ENCODE measurements at regions of chr5 and their contacts with region 1.

Region 1: DNA sequence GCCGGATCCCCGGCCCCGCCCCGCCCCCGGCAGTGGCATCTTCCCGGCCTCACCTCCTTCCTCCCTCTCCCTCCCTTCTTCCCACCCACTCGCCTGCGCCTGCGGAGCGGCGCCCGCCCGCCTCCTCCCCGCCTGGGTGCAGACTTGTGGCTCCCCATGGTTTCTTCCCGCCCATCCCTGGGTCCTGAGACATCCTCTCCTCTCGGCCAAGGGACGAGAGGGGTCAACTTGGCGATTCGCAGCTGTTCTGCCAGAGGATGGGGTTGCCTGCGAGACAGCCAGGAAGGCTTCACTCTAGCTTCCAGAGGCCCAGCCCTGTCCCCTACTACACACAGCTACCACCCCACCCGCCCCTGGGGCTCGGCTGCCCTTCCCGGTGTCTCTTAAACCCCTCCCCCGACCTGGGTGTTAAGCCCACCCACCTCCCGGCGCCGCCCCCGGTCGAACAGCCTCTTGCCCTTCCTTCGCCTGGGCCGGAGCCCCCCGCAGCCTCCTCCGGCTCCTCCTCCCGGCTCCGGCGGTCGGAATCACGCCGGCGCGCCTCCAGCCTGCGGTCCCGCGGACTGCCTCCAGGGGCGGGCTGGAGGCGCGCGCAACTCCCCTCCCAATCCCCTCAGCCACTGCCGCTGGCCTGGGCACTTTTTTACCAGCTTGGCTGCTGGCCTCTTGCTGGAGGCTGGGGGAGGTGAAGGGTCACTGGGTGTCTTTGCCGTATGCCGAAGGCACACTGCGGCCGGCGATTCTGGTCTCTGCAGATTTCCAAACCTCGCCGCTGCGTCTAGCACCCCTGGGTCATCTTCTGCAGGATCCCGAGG is 1.9 kb downstream of the JADE2 start:
- DNase-seq: peak; percentile 92 to 96 (median 96)
- ATAC-seq: peak; percentile 66 to 72
- H3K4me3 ChIP-seq: peak overlapping the region; percentile 95
- H3K27ac ChIP-seq: peak overlapping the region; percentile 94
- H3K4me1 ChIP-seq: peaks cover 26% of the 10 kb centered on the region
- H3K27me3 ChIP-seq: no peaks in the 10 kb centered on the region

Region 2: DNA sequence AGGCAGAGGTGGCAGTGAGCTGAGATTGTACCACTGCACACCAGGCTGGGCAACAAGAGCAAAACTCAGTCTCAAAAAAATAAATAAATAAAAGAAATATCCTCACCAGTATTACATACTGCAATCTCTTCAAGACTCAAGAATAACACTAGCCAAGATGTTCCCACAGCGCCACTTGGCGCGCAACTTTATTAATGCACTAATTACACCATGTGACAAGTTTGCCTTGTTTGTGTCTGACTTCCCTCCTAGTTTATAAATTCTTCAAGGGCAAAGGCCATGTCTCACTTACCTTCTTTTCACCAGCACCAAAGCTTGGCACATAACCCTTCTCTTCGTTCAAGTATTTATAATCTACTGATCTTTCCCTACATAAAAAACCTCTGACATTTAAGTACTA is 355.4 kb before region 1 on chr5:
- intact Hi-C with region 1: no loop called
- DNase-seq: no peak
- ATAC-seq: no peak
- H3K4me3 ChIP-seq: no peak overlapping the region
- H3K27ac ChIP-seq: no peak overlapping the region
- H3K4me1 ChIP-seq: no peaks in the 10 kb centered on the region
- H3K27me3 ChIP-seq: no peaks in the 10 kb centered on the region

Region 3: GRCh38 chr5:134411546-134412266 is 115.6 kb before region 1 on chr5 and contains the start of gene CDKN2AIPNL:
- intact Hi-C with region 1: loop called in 3 of 4 experiments (anchors 2 to 10 kb)
- DNase-seq: peak; percentile 94 to 97 (median 97)
- ATAC-seq: peak; percentile 99
- H3K4me3 ChIP-seq: peak within 1 kb of the TSS; percentile 81
- H3K27ac ChIP-seq: peak within 1 kb of the TSS; percentile 73
- H3K4me1 ChIP-seq: peaks cover 2% of the 10 kb centered on the region
- H3K27me3 ChIP-seq: no peaks in the 10 kb centered on the region
- total RNA-seq, gene CDKN2AIPNL: 33.5 to 42.0 (median 37.5) TPM